Keratinocyte (primary cell): ENCODE measurements at regions of chr10 and their contacts with region 1.

Region 1: DNA sequence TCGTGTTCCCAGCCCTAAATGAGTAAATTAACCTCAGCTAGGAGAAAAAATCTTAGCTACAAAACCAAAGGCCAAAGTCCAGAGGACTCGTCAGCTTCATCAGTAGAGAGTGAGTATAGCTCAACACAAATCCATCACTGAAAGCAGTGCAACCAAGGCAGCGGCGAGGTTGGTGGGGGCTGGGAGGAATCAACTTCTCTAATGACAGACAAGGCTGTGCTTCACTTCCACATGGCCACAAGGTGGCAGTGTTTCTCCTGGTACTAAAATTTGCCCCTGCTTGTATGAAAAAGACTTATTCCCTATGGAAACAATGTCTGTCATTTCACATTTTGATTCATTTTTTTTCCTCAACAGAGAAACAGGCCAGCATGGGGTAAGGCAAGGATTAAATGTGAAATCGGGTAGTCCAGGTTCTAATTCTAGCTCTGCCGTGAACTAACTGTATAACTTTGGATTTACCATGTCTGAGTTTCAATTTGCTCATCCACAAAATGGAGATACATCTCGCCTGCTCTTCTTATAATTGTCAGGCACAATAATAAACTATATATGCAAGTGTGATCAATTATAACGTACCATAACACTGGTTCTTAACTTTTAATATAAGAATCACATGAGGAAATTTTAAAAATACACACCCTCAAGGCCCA is 39.3 kb downstream of the FAS start:
- DNase-seq: no peak
- H3K4me3 ChIP-seq: no peak overlapping the region
- H3K27ac ChIP-seq: no peak overlapping the region
- H3K4me1 ChIP-seq: peaks cover 19% of the 10 kb centered on the region
- H3K27me3 ChIP-seq: no peaks in the 10 kb centered on the region
- CTCF ChIP-seq: peak; percentile 78 to 95 (median 92)

Region 2: GRCh38 chr10:89086801-89087521 is 57.0 kb after region 1 on chr10:
- dilution Hi-C with region 1: no loop called
- DNase-seq: no peak
- H3K4me3 ChIP-seq: no peak overlapping the region
- H3K27ac ChIP-seq: no peak overlapping the region
- H3K4me1 ChIP-seq: no peaks in the 10 kb centered on the region
- H3K27me3 ChIP-seq: no peaks in the 10 kb centered on the region
- CTCF ChIP-seq: no peak

Region 3: DNA sequence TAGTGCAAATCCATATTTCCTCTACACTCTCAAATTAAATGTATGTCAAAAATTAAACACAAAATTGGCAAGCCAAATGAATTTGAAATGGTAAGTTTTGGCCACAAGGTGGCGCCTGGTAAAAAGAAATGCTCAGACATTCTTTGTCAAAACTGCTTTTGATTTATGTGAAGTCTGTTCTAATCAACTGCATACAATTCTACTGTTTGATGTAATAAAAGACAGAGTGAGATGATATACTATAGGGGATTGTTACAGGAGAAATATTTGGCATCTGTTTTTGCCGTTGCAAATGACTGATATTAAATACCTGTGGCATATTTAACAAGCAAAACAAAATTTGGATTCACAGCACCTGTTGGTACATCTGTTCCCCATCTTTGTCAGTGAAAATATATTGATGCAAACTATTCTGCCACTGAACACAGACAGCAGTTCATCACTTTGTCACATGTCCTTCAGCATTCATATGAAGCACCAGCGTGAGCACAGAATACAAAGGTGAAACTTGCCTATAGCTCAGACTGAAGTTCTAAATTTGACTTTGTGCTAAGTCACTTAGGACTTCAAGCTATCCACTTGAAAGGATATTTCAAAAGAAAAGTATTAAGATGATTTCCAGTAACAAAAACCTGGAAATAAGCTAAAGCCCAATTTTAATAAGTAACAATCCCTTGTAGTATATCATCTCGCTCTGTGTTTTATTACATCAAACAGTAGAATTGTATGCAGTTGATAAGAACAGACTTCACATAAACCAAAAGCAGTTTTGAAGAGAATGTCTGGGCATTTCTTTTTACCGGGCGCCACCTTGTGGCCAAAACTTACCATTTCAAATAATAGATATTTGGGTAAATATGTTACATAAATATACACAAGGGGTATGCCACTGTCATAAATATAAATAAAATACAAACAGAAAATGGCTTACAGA is 187.4 kb after region 1 on chr10:
- dilution Hi-C with region 1: loop called (anchors 10 kb)
- DNase-seq: no peak
- H3K4me3 ChIP-seq: no peak overlapping the region
- H3K27ac ChIP-seq: peak overlapping the region; percentile 17
- H3K4me1 ChIP-seq: peaks cover 11% of the 10 kb centered on the region
- H3K27me3 ChIP-seq: no peaks in the 10 kb centered on the region
- CTCF ChIP-seq: peak in 2 of 3 experiments; percentile 48 to 49